ENCODE measurements at regions of chr1 and their contacts with region 1.

Region 1: DNA sequence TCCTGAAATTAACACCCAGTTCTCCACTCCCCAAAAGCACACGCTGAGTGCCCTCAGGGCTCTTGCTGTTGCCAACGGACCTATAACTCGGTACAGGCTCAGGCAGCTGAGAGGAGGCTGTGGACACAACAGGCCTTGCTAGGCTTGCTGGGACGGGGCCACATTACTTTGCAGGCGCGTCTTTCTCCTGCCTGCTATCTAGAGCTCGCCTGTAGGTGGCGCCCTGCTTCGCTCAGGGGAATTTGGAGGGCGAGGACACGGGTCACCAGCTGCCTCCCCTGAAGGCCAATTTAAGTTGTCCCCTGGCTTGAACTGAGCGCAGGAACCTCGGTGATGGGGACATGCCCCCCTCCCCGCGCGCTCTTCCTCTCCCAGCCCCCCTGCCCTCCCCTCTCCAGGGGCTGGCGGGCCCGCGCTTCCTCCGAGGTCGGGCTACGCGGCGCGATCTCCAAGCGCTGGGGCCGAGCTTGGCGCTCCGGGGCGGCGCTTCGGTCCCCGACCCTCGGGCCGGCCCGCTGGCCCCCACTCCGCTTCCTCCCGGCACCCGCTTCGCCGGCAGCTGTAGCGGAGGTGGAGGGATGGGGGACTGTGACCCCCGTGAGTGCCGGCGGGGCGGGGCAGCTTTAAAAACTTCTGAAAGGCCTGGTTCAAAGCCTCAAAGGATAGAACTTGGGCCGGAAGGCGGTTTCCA is 32.4 kb upstream of the NFIA start:
- DNase-seq: peak; percentile 97

Region 2: DNA sequence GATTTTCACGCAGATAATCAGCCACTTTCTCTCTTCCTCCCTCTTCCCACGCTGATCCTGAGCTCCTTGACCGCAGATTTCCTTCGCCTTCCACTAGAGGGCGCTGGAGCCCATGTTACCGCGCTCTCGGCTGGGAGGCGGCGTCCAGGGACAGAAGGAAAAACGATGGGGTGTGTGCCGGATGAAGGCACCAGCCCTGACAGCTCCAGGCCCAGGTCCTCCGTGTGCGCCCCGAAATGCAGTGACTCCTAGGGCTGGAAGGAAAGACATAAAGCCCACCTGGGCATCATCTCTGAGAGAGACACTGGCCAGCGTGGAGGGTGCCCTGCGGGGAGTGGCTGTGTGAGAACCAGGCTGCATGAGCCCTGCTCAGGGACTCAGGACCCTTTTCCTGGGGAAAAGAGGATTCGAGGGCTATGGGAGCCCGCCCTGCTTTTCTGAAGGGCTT is 1078.5 kb before region 1 on chr1:
- intact Hi-C with region 1: loop called (anchors 10 kb)
- DNase-seq: peak; percentile 83

Region 3: GRCh38 chr1:61120998-61121397 is 71.0 kb after region 1 on chr1:
- intact Hi-C with region 1: loop called (anchors 5 kb)
- DNase-seq: no peak

Region 4: DNA sequence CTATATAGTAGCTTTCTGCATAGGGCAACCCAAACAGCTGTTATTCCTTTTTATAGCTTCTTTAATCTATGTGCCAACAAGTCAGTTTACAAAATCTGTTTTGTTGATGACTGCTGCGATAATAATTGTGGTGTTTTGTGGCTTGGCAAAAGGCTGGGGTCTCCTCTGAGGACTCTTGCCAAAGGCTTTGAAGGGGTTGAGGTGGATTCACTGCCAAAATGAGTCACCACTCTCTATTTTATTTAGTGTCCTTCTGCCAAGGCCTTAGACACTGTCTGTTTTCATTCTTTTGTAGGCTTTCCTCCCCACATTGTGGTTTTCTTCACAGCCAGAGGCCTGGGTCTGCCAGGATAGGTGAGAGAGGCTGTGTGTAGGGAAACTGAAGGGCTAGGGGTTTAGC is 194.1 kb after region 1 on chr1:
- intact Hi-C with region 1: loop called (anchors 5 kb)
- DNase-seq: no peak

Region 5: DNA sequence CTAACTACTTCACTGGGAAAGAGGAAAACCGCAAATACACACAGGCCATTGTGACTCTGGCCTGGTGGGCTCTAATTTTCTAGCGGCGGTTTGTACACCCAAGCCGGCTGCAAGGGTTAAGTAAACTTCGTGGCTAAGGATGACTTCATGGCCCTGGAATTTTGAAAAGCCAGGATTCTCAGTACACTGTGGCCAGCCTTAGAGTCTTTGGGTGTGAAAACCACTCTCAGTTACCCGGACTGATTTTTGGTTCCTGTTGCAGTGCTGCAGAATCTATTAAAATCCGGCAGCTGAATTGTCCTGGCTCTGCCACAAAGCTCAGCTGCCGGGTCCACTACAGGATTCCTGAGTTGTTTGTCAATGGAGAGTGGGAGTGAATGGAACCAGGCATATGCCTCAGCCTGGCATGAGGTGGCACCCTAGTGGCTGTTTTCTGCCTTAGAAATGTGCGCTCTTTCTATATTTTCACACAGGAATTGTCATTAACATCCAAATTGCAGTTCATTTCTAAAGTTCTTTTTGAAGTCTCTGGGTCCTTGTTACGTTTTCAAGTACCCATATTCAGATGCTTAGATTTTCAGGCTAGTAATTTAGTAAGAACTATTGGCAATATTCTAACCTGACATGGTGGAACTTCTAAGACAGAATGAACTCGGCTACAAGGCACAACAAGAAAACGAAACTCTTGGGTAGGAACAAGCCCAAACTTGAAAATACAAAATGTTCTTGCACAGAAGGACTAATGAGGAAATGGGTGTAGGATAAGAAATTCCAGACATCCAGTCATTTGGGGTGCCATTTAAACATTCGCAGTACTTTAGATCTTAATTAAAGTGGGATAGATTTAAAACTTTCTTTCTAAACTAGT is 288.2 kb after region 1 on chr1:
- intact Hi-C with region 1: loop called (anchors 1 kb)
- DNase-seq: peak; percentile 80

Region 6: DNA sequence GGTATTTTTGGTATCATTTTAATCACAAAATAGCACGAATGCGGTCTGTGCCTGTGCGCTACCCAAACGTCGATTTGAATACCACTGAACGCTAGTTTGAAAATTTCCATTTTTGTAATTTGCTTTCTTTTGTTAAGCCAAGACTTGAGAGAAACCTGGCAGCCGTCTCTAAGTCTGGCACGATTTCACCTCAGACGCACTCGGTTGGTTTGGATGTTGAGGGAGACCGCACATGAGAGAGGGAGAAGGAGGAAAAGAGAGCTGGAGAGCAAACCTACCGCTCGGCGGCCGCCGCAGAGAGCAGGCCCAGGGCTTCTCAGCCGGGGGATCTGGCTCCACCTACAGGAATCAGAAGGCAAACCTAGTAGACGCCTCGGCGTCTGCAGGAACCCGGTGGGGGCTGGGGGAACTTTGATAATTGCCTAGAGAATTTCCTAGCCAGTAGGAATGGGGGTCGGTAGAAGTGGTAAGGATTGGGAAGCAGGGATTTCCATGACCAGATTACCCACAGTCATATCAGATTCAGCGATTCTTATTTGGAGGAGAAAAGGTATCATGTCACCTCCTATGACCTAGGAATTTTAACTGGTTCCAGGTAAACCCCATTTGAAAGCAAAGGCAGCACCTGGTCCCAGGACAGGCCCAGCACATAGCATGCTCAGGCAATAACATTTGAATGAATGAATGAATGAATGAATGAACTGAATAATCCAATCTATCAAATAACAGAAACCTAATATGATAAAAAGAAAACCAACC is 591.8 kb after region 1 on chr1:
- intact Hi-C with region 1: loop called (anchors 5 kb)
- DNase-seq: peak; percentile 90

Region 7: GRCh38 chr1:61741711-61742619 is 692.0 kb after region 1 on chr1 and contains the start of gene PATJ:
- intact Hi-C with region 1: loop called (anchors 5 kb)
- DNase-seq: no peak
- total RNA-seq, gene PATJ: 71.2 TPM

Measured in cardiac septum (tissue), 1 donor.